ENCODE measurements at regions of chr18 and their contacts with region 1.

Region 1: DNA sequence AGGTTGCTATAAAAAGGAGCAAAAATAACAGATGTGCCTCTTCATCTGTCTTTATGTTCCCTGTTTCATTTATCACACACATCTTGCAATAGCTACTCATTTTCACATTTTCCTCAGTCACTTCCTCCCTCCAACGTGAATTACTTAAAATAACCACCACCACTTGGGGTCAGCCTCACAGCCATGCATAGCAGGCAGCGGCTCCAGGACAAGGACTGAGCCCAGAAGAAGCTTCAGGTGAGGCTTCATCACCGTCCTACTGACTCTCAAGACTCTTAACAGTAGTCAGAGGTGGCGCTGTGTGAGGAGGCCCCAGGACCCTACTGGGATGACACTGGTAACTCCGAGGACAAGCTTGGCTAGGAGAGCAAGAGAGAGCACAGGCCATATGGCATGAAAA is 15.5 kb upstream of the ST8SIA5 start:
- DNase-seq: no peak
- ATAC-seq: no peak
- H3K4me3 ChIP-seq: no peak overlapping the region
- H3K27ac ChIP-seq: no peak overlapping the region
- H3K4me1 ChIP-seq: peaks cover 0 to 19% (median 9%) of the 10 kb centered on the region in 12 donors
- H3K27me3 ChIP-seq: no peaks in the 10 kb centered on the region
- CTCF ChIP-seq: peak in 1 of 12 donors; percentile 3
- POLR2A ChIP-seq: no peak

Region 2: DNA sequence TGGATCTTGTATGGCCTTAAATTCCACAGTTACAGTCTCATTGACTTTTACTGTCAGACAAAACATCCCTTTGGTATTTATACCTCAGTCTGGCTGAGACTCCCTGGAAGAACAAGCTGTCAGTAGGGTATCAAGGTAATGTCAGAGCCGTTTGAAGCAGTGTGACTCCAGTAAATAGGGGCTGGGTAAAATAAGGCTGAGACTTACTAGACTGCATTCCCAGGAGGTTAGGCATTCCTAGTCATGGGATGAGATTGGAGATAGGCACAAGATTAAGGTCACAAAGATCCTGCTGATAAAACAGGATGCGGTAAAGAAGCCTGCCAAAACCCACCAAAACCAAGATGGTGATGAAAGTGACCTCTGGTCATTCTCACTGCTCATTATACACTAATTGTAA is 698.6 kb after region 1 on chr18:
- intact Hi-C with region 1: loop called in 1 of 10 experiments (anchors 10 kb)
- DNase-seq: no peak
- ATAC-seq: no peak
- H3K4me3 ChIP-seq: no peak overlapping the region
- H3K27ac ChIP-seq: no peak overlapping the region
- H3K4me1 ChIP-seq: no peaks in the 10 kb centered on the region
- H3K27me3 ChIP-seq: peaks cover 0 to 3% (median 0%) of the 10 kb centered on the region in 9 donors
- CTCF ChIP-seq: no peak
- POLR2A ChIP-seq: no peak

Measured in heart left ventricle (tissue), 16 donors.